ENCODE measurements at regions of chr12 and their contacts with region 1.

Region 1: DNA sequence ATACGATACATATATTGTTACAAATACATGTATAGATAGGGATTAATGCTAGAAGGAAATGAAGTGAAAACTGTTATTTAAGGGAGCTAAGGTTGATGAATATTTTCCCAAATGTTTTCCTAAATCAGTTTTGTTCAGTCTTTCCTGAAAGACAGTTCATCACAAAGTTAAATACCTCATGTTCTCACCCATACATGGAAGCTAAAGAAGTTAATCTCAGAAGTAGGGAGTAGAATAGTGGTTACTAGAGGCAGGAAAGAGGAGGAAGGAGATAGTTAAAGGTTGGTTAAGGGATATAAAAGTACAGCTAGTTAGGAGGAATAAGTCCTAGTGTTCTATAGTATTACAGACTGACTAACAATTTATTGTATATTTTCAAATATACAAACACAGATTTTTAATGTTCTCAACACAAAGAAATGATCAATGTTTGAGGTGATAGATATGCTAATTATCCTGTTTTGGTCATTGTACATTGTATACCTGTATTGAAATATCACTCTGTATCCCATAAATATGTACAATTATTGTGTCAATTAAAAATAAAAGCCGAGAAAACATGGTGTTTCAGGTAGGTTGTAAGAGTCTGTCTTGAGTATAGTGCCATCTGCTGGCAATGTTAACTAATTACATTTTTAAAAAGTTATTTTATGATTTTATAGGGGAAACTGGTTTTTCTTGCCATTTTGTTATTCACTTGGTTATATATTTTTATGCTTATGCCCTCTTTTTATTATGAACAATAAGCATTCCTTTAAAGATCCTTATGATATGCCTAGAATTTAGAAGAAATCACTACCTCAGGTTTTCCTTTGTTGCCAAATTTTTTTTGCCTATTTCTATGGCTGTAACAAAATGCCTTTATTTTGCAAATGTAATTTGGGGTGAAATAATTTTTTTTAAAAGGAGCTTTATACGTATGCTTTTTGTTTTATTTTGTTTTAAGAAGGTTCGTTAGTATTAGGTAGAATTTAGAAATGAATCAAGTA is 26.9 kb downstream of the ZDHHC17 start:
- DNase-seq: no peak
- ATAC-seq: peak; percentile 43

Region 2: GRCh38 chr12:77010691-77011548 is 220.1 kb after region 1 on chr12:
- intact Hi-C with region 1: loop called (anchors 2 kb)
- DNase-seq: peak; percentile 77
- ATAC-seq: peak; percentile 70